PC-9 (cell line): ENCODE measurements at regions of chr1 and their contacts with region 1.

Region 1: GRCh38 chr1:60865166-60865565 is 217.2 kb upstream of the NFIA start:
- DNase-seq: no peak
- H3K4me3 ChIP-seq: no peak overlapping the region
- H3K27ac ChIP-seq: no peak overlapping the region
- H3K4me1 ChIP-seq: 0 out of 2 replicates have a peak, but pooled peaks cover 6% of the 10 kb centered on the region
- H3K27me3 ChIP-seq: no peaks in the 10 kb centered on the region
- CTCF ChIP-seq: no peak

Region 2: GRCh38 chr1:60833173-60833572 is 32.0 kb before region 1 on chr1:
- CTCF ChIA-PET with region 1: no interaction called
- POLR2A ChIA-PET with region 1: no interaction called
- intact Hi-C with region 1: no loop called
- DNase-seq: no peak
- H3K4me3 ChIP-seq: no peak overlapping the region
- H3K27ac ChIP-seq: no peak overlapping the region
- H3K4me1 ChIP-seq: no peaks in the 10 kb centered on the region
- H3K27me3 ChIP-seq: no peaks in the 10 kb centered on the region
- CTCF ChIP-seq: no peak

Region 3: DNA sequence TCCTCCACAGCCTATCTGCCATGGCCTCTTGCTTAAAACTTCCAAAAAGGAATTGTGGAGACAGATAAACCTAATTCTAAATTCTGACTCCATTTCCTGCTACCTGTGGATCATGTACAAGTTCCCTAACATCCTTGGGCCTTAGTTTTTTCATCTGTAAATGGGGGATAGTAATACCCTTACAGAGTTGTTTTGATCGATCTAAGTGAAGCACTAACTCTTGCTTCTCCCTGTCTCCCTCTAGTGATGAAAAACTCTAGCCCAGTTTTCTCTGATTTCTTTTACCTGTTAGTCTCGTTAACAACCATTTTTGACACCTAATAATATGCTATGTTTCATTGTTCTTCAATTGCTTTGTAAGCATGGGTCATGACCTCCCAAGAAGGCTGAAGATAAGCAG is 793.9 kb after region 1 on chr1:
- CTCF ChIA-PET with region 1: interaction called, 20 read pairs
- POLR2A ChIA-PET with region 1: no interaction called
- intact Hi-C with region 1: no loop called
- DNase-seq: no peak
- H3K4me3 ChIP-seq: no peak overlapping the region
- H3K27ac ChIP-seq: no peak overlapping the region
- H3K4me1 ChIP-seq: no peaks in the 10 kb centered on the region
- H3K27me3 ChIP-seq: no peaks in the 10 kb centered on the region
- CTCF ChIP-seq: peak; percentile 41; the same call in 1 of the 2 replicates